CD8-positive, alpha-beta memory T cell (primary cell): ENCODE measurements at regions of chr15 and their contacts with region 1.

Region 1: DNA sequence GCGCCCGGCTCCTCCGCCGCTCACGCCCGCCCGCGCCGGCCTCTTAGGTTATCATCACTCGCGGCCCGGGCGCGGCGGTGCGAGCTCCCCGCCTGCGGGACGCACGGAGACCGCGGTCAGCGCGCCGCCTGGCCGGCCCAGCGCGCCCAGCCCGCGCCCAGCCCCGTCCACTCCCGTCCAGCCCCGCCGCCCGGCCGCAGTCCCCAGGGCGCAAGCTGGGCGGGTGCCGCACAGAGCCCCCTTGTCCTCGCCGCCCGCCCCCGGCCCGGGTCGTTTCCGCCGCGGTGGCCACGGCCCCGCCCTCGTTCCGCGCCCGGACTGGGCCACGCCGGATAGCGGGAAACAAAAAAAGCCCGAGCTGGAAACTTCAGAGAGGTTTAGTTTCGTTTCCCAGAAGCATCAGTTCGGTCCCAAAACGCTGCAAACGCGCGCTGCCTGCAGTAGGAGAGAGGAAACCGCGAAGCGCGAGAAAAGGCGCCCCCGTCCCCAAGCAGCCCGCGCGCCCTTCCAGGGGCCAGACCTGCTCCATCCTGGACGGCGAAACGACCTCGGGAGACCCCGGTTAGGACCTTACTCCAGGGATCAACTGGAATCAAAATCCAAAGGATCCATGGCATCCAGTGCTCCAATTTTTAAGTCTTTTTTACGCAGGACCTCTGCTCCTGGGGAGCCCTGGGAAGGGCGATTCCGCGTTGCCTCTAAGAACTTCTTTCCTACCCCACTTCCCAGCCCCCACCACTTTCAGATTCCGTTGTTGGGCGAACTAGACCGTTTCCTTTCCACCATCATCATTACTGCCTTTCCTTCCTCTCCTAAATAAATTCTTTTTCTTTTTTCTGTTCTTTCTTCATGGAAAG is at the start of gene ATP10A:
- DNase-seq: peak in 4 of 5 donors; percentile 31 to 59 (median 40)
- H3K4me3 ChIP-seq: peak within 1 kb of the TSS; percentile 77
- H3K4me3 Mint-ChIP-seq: peak within 1 kb of the TSS; percentile 88 to 99 (median 94)
- H3K27ac ChIP-seq: peak within 1 kb of the TSS; percentile 48
- H3K27ac Mint-ChIP-seq: peak within 1 kb of the TSS; percentile 93 to 99 (median 96)
- H3K4me1 ChIP-seq: peaks cover 27% of the 10 kb centered on the region
- H3K4me1 Mint-ChIP-seq: peaks cover 38 to 45% (median 41%) of the 10 kb centered on the region in 3 donors
- H3K27me3 ChIP-seq: no peaks in the 10 kb centered on the region
- H3K27me3 Mint-ChIP-seq: peaks cover 0 to 4% of the 10 kb centered on the region in 2 donors
- total RNA-seq, gene ATP10A: 24.0 to 28.9 TPM

Region 2: GRCh38 chr15:25783607-25784540 is 79.5 kb before region 1 on chr15:
- CTCF ChIA-PET with region 1: interaction called, 11 read pairs
- POLR2A ChIA-PET with region 1: interaction called, 4 read pairs
- DNase-seq: peak in 4 of 5 donors; percentile 10 to 55 (median 22)
- H3K4me3 ChIP-seq: no peak overlapping the region
- H3K4me3 Mint-ChIP-seq: no peak overlapping the region
- H3K27ac ChIP-seq: no peak overlapping the region
- H3K27ac Mint-ChIP-seq: no peak overlapping the region
- H3K4me1 ChIP-seq: peaks cover 8% of the 10 kb centered on the region
- H3K4me1 Mint-ChIP-seq: peaks cover 16 to 36% (median 21%) of the 10 kb centered on the region in 3 donors
- H3K27me3 ChIP-seq: no peaks in the 10 kb centered on the region
- H3K27me3 Mint-ChIP-seq: no peaks in the 10 kb centered on the region

Region 3: DNA sequence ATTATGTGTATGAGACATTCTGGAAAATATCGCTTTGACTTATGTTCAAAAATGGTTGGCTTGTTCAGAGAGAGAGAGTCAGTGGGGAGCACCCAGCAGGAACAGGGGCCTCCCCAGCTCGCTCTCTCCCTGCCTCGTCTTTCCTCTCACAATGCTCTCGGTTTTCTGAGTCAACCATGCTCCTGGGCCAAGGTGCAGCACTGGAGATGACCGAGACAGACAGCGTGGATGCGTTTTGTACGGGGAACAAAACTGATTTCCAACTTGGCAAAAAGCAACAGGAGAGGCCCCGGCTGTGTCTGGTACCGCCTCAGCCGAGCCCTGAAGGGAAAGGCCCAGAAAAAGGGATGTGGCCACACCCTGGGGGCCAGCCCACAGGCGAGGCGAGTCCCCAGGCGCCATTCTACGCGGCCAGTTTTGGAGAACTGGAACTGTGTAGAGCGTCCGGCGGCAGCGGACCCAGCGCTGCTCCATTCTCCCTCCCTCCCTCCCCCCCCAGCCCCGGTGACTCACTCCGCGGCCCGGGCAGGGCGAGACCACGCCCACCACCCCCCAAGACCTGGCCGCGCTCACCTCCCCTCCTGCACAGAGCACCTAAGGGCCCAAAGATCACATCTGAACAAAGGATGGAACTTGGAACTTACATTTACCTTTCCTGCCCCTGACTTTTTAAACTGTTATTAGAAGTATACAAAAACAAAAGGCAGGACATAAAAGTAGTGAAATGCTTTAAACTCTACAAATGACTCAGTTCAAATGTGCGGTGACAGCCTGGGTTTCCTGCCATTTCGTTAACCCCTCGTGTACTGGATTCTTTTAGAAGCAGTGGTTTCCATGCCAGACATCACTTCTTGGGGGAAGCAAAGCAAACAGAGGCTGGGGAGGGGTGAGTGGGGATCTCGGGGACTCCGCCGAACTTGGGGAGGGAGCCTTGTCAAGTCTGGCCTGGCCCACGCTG is 12.9 kb before region 1 on chr15:
- CTCF ChIA-PET with region 1: interaction called, 31 read pairs
- POLR2A ChIA-PET with region 1: interaction called, 11 read pairs
- DNase-seq: peak; percentile 49 to 80 (median 68)
- H3K4me3 ChIP-seq: peak overlapping the region; percentile 47
- H3K4me3 Mint-ChIP-seq: peak overlapping the region; percentile 84 to 96 (median 93)
- H3K27ac ChIP-seq: peak overlapping the region; percentile 58
- H3K27ac Mint-ChIP-seq: peak overlapping the region; percentile 93 to 99 (median 96)
- H3K4me1 ChIP-seq: peaks cover 90% of the 10 kb centered on the region
- H3K4me1 Mint-ChIP-seq: peaks cover 76 to 94% (median 87%) of the 10 kb centered on the region in 3 donors
- H3K27me3 ChIP-seq: no peaks in the 10 kb centered on the region
- H3K27me3 Mint-ChIP-seq: peaks cover 0 to 2% of the 10 kb centered on the region in 2 donors

Region 4: DNA sequence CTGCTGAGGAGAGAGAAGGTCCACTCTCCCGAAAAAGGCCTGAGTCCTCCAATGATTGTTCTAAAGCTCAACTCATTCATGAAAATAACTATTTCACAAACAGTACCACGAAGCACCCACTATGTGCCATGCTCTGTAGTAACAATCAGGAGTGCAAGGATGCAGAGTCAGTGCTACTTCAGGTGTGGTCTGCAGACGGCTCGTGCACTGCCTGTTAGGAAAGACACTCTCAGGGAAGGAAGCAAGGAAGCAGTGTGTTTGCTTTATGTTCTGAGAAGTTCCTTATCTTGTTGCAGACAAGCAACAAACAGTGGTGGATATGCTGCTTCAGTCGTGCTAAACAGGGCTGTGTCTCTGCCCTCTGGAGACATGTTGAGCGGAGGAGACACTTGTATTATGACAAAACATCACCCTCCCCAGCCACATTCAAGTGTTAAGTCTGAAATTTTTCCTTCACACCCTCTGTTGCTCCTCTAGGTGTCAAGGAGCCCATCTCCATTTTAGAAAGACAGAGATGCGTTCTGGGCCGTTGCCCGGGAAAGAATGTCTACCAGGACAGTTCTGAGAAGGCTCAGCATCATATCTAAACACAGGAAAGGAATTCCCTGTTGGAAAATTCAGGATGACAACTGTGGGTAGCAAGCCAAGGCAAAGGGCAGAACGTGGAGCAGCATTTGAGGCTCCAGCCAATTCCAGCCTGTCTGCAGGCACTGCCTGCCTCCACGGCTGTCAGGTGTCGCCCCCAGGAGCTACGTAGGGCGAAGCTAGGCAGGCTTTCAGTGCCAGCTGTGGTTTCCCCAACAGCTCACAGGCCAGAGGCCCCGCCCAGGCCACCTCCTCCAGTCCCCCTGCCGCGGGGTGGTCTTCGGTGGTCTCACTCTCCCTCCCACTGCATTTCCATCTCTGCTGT is 13.1 kb after region 1 on chr15:
- CTCF ChIA-PET with region 1: no interaction called
- POLR2A ChIA-PET with region 1: no interaction called
- DNase-seq: no peak
- H3K4me3 ChIP-seq: no peak overlapping the region
- H3K4me3 Mint-ChIP-seq: no peak overlapping the region
- H3K27ac ChIP-seq: no peak overlapping the region
- H3K27ac Mint-ChIP-seq: no peak overlapping the region
- H3K4me1 ChIP-seq: no peaks in the 10 kb centered on the region
- H3K4me1 Mint-ChIP-seq: no peaks in the 10 kb centered on the region
- H3K27me3 ChIP-seq: no peaks in the 10 kb centered on the region
- H3K27me3 Mint-ChIP-seq: no peaks in the 10 kb centered on the region

Region 5: GRCh38 chr15:25947323-25948314 is 84.3 kb after region 1 on chr15:
- CTCF ChIA-PET with region 1: no interaction called
- POLR2A ChIA-PET with region 1: no interaction called
- DNase-seq: no peak
- H3K4me3 ChIP-seq: no peak overlapping the region
- H3K4me3 Mint-ChIP-seq: no peak overlapping the region
- H3K27ac ChIP-seq: no peak overlapping the region
- H3K27ac Mint-ChIP-seq: no peak overlapping the region
- H3K4me1 ChIP-seq: no peaks in the 10 kb centered on the region
- H3K4me1 Mint-ChIP-seq: no peaks in the 10 kb centered on the region
- H3K27me3 ChIP-seq: no peaks in the 10 kb centered on the region
- H3K27me3 Mint-ChIP-seq: peaks cover 0 to 6% of the 10 kb centered on the region in 2 donors